ENCODE measurements at regions of chr9 and their contacts with region 1.

Region 1: GRCh38 chr9:38068866-38069629 is at the start of gene SHB:
- DNase-seq: peak; percentile 85 to 92 (median 89)
- ATAC-seq: peak; percentile 26 to 83 (median 69)
- H3K4me3 ChIP-seq: peak within 1 kb of the TSS; percentile 78 to 100 (median 94)
- H3K27ac ChIP-seq: peak within 1 kb of the TSS; percentile 91 to 100 (median 96)
- H3K4me1 ChIP-seq: peaks cover 0 to 54% (median 22%) of the 10 kb centered on the region in 12 donors
- H3K27me3 ChIP-seq: peaks cover 0 to 13% (median 0%) of the 10 kb centered on the region in 9 donors
- CTCF ChIP-seq: peak in 3 of 12 donors; percentile 4 to 67 (median 48)
- POLR2A ChIP-seq: peak in 1 of 2 donors; percentile 89
- total RNA-seq, gene SHB: 10.7 to 31.4 (median 21.4) TPM

Region 2: DNA sequence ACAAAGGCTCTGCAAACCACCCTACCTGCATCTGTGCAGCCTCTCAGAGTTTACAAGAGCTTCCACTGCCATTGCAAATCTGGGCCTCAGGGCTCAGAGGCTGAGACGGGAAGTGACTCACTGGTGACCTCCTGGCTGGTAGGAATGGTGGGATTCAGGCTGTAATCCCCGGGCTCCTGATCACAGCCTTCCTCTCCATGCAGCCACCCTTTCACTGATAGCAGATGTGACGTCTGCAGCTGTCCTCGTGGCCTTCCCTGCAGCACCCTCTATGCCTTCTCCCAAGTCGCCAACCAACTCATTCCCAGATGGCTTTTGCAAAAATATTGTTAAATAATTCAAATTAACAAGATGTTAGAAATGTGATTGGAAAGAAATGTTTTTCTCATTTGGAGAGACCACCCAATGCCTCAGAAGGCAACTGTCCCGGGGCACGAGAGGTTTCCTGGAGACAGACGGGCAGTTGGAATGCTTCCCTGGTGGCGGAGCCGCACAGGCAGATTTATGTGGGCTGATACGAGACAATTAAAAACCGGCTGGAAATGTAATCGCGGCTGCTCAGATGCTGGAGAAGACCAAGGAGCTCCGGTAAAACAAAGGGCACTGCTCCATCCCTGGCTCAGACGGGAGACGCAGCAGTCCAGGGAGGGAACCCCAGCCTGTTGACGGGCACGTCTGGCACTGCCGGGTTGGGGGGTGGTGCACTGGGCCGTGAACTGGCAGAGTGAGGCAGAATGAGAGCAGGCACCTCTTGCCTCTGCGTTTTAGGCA is 130.7 kb before region 1 on chr9:
- intact Hi-C with region 1: loop called in 3 of 10 experiments (anchors 5 kb)
- DNase-seq: peak; percentile 38 to 74 (median 64)
- ATAC-seq: peak; percentile 30 to 70 (median 61)
- H3K4me3 ChIP-seq: no peak overlapping the region
- H3K27ac ChIP-seq: peak overlapping the region; percentile 2 to 74 (median 60)
- H3K4me1 ChIP-seq: peaks cover 9 to 55% (median 44%) of the 10 kb centered on the region in 12 donors
- H3K27me3 ChIP-seq: no peaks in the 10 kb centered on the region
- CTCF ChIP-seq: no peak
- POLR2A ChIP-seq: no peak

Region 3: GRCh38 chr9:37984672-37985611 is 84.1 kb before region 1 on chr9:
- intact Hi-C with region 1: loop called in 3 of 10 experiments (anchors 5 to 10 kb)
- DNase-seq: peak; percentile 56 to 73 (median 66)
- ATAC-seq: peak; percentile 83 to 88 (median 86)
- H3K4me3 ChIP-seq: no peak overlapping the region
- H3K27ac ChIP-seq: peak overlapping the region in 10 of 12 donors; percentile 8 to 81 (median 18)
- H3K4me1 ChIP-seq: peaks cover 3 to 67% (median 42%) of the 10 kb centered on the region in 12 donors
- H3K27me3 ChIP-seq: no peaks in the 10 kb centered on the region
- CTCF ChIP-seq: peak in 4 of 12 donors; percentile 14 to 32 (median 18)
- POLR2A ChIP-seq: no peak

Region 4: GRCh38 chr9:38017149-38017884 is 51.7 kb before region 1 on chr9:
- intact Hi-C with region 1: loop called in 8 of 10 experiments (anchors 2 to 10 kb)
- DNase-seq: peak; percentile 74 to 88 (median 79)
- ATAC-seq: peak; percentile 71 to 90 (median 84)
- H3K4me3 ChIP-seq: no peak overlapping the region
- H3K27ac ChIP-seq: peak overlapping the region in 10 of 12 donors; percentile 18 to 87 (median 72)
- H3K4me1 ChIP-seq: peaks cover 11 to 65% (median 48%) of the 10 kb centered on the region in 12 donors
- H3K27me3 ChIP-seq: no peaks in the 10 kb centered on the region
- CTCF ChIP-seq: peak in 11 of 12 donors; percentile 24 to 63 (median 49)
- POLR2A ChIP-seq: no peak

Region 5: DNA sequence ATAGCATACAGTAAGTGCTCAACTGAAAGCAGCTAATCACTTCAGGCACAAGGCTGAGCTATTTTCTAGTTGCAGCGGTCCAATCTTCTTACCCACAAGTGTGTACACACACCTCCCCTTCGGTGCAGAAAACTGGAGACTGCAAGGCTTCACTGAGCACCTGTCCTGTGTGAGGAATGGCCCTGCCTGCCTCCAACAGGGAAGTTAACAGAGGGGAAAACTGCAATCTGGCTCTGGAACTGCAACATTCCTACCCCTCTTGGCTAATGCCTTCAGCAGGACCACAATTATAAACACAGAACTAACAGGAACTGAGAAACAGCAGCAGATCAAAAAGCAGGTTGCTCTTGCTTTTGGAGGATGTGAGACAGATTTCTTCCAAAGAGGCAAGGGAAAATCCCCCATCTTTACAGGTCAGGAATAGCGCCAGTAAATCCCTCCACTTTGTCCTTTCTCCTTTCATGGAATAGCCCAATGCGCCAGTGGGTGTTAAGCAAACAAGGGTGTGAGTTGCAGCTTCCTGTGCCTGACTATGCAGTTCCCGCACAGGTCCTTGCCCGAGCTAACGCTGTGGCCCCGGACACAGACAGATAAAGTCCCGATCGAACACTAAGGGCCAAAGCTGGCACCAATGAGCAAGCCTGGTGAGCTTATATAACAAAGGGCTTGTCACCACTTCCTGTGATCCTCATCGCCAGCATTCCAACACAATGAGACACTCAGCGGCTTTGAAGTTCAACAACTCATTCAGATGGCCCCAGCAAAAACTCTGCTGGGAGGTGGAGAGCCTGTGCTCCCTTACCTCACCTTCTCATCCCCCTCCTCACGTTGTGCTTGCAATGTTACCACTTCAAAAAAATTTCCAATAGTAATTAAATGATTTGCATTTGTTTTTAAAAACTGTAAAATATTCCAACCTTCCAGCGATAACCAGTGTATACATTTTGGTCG is 21.5 kb before region 1 on chr9:
- intact Hi-C with region 1: loop called in 1 of 10 experiments (anchors 2 kb)
- DNase-seq: peak; percentile 73 to 87 (median 75)
- ATAC-seq: peak; percentile 91 to 93 (median 92)
- H3K4me3 ChIP-seq: peak overlapping the region in 2 of 12 donors; percentile 10 to 19
- H3K27ac ChIP-seq: peak overlapping the region; percentile 46 to 95 (median 82)
- H3K4me1 ChIP-seq: peaks cover 0 to 76% (median 49%) of the 10 kb centered on the region in 12 donors
- H3K27me3 ChIP-seq: no peaks in the 10 kb centered on the region
- CTCF ChIP-seq: no peak
- POLR2A ChIP-seq: no peak

Region 6: GRCh38 chr9:38106488-38106887 is 37.4 kb after region 1 on chr9:
- intact Hi-C with region 1: no loop called
- DNase-seq: no peak
- ATAC-seq: no peak
- H3K4me3 ChIP-seq: no peak overlapping the region
- H3K27ac ChIP-seq: no peak overlapping the region
- H3K4me1 ChIP-seq: peaks cover 0 to 6% (median 0%) of the 10 kb centered on the region in 12 donors
- H3K27me3 ChIP-seq: no peaks in the 10 kb centered on the region
- CTCF ChIP-seq: no peak
- POLR2A ChIP-seq: no peak

Measured in heart left ventricle (tissue), 16 donors.